ENCODE measurements at regions of chr5 and their contacts with region 1.

Region 1: GRCh38 chr5:14208071-14209021 is 65.2 kb downstream of the TRIO start:
- DNase-seq: peak; percentile 51
- ATAC-seq: peak; percentile 25
- H3K4me3 ChIP-seq: peak overlapping the region in 2 of 5 experiments; percentile 0 to 9
- H3K4me3 Mint-ChIP-seq: peak overlapping the region; percentile 74
- H3K27ac ChIP-seq: peak overlapping the region; percentile 80 to 94
- H3K27ac Mint-ChIP-seq: peak overlapping the region; percentile 93
- H3K4me1 ChIP-seq: peaks cover 84 to 88% of the 10 kb centered on the region in 2 donors
- H3K4me1 Mint-ChIP-seq: peaks cover 85% of the 10 kb centered on the region
- H3K27me3 ChIP-seq: no peaks in the 10 kb centered on the region
- H3K27me3 Mint-ChIP-seq: no peaks in the 10 kb centered on the region
- CTCF ChIP-seq: no peak

Region 2: GRCh38 chr5:13921578-13921977 is 286.8 kb before region 1 on chr5:
- CTCF ChIA-PET with region 1: no interaction called
- POLR2A ChIA-PET with region 1: no interaction called
- intact Hi-C with region 1: no loop called
- DNase-seq: no peak
- ATAC-seq: no peak
- H3K4me3 ChIP-seq: no peak overlapping the region
- H3K4me3 Mint-ChIP-seq: no peak overlapping the region
- H3K27ac ChIP-seq: no peak overlapping the region
- H3K27ac Mint-ChIP-seq: no peak overlapping the region
- H3K4me1 ChIP-seq: no peaks in the 10 kb centered on the region
- H3K4me1 Mint-ChIP-seq: no peaks in the 10 kb centered on the region
- H3K27me3 ChIP-seq: no peaks in the 10 kb centered on the region
- H3K27me3 Mint-ChIP-seq: peaks cover 6% of the 10 kb centered on the region
- CTCF ChIP-seq: no peak

Region 3: GRCh38 chr5:14156650-14157493 is 51.5 kb before region 1 on chr5:
- CTCF ChIA-PET with region 1: interaction called, 15 read pairs
- POLR2A ChIA-PET with region 1: interaction called, 3 read pairs
- intact Hi-C with region 1: loop called (anchors 2 kb)
- DNase-seq: peak; percentile 48
- ATAC-seq: peak; percentile 60
- H3K4me3 ChIP-seq: peak overlapping the region in 1 of 5 experiments; percentile 49
- H3K4me3 Mint-ChIP-seq: no peak overlapping the region
- H3K27ac ChIP-seq: peak overlapping the region; percentile 83 to 91
- H3K27ac Mint-ChIP-seq: no peak overlapping the region
- H3K4me1 ChIP-seq: peaks cover 53 to 78% of the 10 kb centered on the region in 2 donors
- H3K4me1 Mint-ChIP-seq: peaks cover 44% of the 10 kb centered on the region
- H3K27me3 ChIP-seq: no peaks in the 10 kb centered on the region
- H3K27me3 Mint-ChIP-seq: no peaks in the 10 kb centered on the region
- CTCF ChIP-seq: no peak

Region 4: GRCh38 chr5:14168144-14168792 is 40.1 kb before region 1 on chr5:
- CTCF ChIA-PET with region 1: interaction called, 5 read pairs
- POLR2A ChIA-PET with region 1: interaction called, 3 read pairs
- intact Hi-C with region 1: loop called (anchors 1 kb)
- DNase-seq: peak; percentile 67
- ATAC-seq: peak; percentile 62
- H3K4me3 ChIP-seq: peak overlapping the region; percentile 19 to 62 (median 54)
- H3K4me3 Mint-ChIP-seq: peak overlapping the region; percentile 85
- H3K27ac ChIP-seq: peak overlapping the region; percentile 65 to 83
- H3K27ac Mint-ChIP-seq: peak overlapping the region; percentile 90
- H3K4me1 ChIP-seq: peaks cover 64 to 65% of the 10 kb centered on the region in 2 donors
- H3K4me1 Mint-ChIP-seq: peaks cover 83% of the 10 kb centered on the region
- H3K27me3 ChIP-seq: no peaks in the 10 kb centered on the region
- H3K27me3 Mint-ChIP-seq: no peaks in the 10 kb centered on the region
- CTCF ChIP-seq: no peak

Region 5: GRCh38 chr5:14174230-14174637 is 34.1 kb before region 1 on chr5:
- CTCF ChIA-PET with region 1: no interaction called
- POLR2A ChIA-PET with region 1: interaction called, 3 read pairs
- intact Hi-C with region 1: loop called (anchors 1 kb)
- DNase-seq: peak; percentile 62
- ATAC-seq: peak; percentile 59
- H3K4me3 ChIP-seq: peak overlapping the region in 4 of 5 experiments; percentile 10 to 58 (median 33)
- H3K4me3 Mint-ChIP-seq: peak overlapping the region; percentile 75
- H3K27ac ChIP-seq: peak overlapping the region; percentile 34 to 65
- H3K27ac Mint-ChIP-seq: peak overlapping the region; percentile 82
- H3K4me1 ChIP-seq: peaks cover 54 to 56% of the 10 kb centered on the region in 2 donors
- H3K4me1 Mint-ChIP-seq: peaks cover 72% of the 10 kb centered on the region
- H3K27me3 ChIP-seq: no peaks in the 10 kb centered on the region
- H3K27me3 Mint-ChIP-seq: no peaks in the 10 kb centered on the region
- CTCF ChIP-seq: no peak

Region 6: DNA sequence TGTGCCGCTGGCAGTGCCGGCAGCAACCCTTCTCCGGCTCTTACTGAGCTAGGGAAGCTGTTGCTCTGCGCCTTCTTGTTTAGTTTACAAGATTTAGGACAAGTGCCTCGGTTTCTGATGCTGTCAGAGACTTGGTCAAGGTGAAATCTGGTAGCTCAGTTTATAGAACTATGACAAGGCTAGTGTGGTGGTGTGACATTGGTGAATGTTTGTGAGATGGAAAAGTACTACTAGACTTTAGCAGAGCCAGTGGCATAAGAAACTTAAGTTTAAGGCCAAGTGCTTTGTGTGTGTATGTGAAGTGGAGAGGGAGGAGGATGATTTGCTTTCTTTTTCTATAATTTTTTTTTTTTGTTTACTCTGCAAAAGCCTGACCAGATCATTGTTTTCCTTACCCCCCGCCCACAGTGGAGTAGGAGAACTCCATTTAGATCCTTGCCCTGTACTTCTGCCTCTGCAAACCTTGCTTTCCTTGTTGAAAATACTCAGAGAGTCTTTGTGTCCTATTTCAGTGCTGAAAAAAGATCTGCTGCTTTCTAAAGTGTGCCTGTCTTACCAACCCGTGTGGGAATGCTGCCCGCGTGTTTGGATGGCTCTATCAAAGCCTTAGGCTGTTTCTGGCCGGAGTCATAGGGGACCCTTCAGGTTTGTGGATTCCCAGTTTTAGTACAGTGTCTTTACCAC is 10.7 kb after region 1 on chr5:
- CTCF ChIA-PET with region 1: interaction called, 4 read pairs
- POLR2A ChIA-PET with region 1: no interaction called
- intact Hi-C with region 1: loop called (anchors 1 kb)
- DNase-seq: no peak
- ATAC-seq: no peak
- H3K4me3 ChIP-seq: peak overlapping the region in 1 of 5 experiments; percentile 4
- H3K4me3 Mint-ChIP-seq: peak overlapping the region; percentile 66
- H3K27ac ChIP-seq: peak overlapping the region; percentile 21
- H3K27ac Mint-ChIP-seq: peak overlapping the region; percentile 85
- H3K4me1 ChIP-seq: peaks cover 69 to 75% of the 10 kb centered on the region in 2 donors
- H3K4me1 Mint-ChIP-seq: peaks cover 96% of the 10 kb centered on the region
- H3K27me3 ChIP-seq: no peaks in the 10 kb centered on the region
- H3K27me3 Mint-ChIP-seq: no peaks in the 10 kb centered on the region
- CTCF ChIP-seq: no peak

Region 7: GRCh38 chr5:14250084-14250695 is 41.8 kb after region 1 on chr5:
- CTCF ChIA-PET with region 1: interaction called, 10 read pairs
- POLR2A ChIA-PET with region 1: interaction called, 28 read pairs
- intact Hi-C with region 1: loop called (anchors 2 kb)
- DNase-seq: peak; percentile 35
- ATAC-seq: peak; percentile 15
- H3K4me3 ChIP-seq: no peak overlapping the region
- H3K4me3 Mint-ChIP-seq: peak overlapping the region; percentile 68
- H3K27ac ChIP-seq: peak overlapping the region; percentile 71 to 75
- H3K27ac Mint-ChIP-seq: peak overlapping the region; percentile 91
- H3K4me1 ChIP-seq: peaks cover 37 to 40% of the 10 kb centered on the region in 2 donors
- H3K4me1 Mint-ChIP-seq: peaks cover 83% of the 10 kb centered on the region
- H3K27me3 ChIP-seq: no peaks in the 10 kb centered on the region
- H3K27me3 Mint-ChIP-seq: no peaks in the 10 kb centered on the region
- CTCF ChIP-seq: no peak

Region 8: DNA sequence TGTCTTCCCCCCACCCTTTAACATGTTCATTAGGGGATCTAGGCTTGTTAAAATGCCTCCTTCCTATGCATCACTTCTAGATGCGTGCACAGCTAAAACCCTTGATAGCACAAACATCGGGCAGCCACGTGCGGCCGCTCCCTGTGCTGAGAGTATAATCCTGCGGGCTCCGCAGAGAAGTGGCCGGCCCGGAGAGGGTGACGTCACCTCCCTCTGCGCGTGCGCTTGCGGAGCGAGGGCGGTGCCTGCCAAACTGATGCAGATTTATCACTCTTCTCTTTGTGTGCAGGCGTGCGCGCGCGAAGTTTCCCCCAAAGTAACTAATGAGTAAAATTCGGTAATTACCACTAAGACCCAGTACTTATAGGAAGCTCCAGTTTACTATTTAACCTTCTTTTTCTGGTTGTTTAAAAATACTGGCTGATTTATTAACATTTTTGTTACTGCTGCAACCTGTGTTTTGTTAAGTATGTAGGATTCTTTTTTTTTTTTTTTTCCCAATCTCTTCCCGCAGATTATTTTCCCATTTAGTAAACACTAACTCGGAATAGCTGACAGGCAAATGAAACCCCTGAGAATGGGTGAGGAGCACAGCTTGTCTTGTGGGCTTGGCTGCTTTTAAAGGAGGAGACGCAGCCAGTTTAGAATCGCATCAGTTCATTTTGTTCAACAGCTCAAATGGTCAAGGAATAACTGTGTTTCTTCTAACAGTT is 56.4 kb after region 1 on chr5:
- CTCF ChIA-PET with region 1: interaction called, 9 read pairs
- POLR2A ChIA-PET with region 1: no interaction called
- intact Hi-C with region 1: loop called (anchors 2 kb)
- DNase-seq: peak; percentile 89
- ATAC-seq: peak; percentile 97
- H3K4me3 ChIP-seq: peak overlapping the region; percentile 5 to 60 (median 32)
- H3K4me3 Mint-ChIP-seq: peak overlapping the region; percentile 82
- H3K27ac ChIP-seq: peak overlapping the region in 1 of 2 donors; percentile 21
- H3K27ac Mint-ChIP-seq: peak overlapping the region; percentile 88
- H3K4me1 ChIP-seq: peaks cover 22 to 23% of the 10 kb centered on the region in 2 donors
- H3K4me1 Mint-ChIP-seq: peaks cover 74% of the 10 kb centered on the region
- H3K27me3 ChIP-seq: no peaks in the 10 kb centered on the region
- H3K27me3 Mint-ChIP-seq: no peaks in the 10 kb centered on the region
- CTCF ChIP-seq: no peak